Endothelial cell of umbilical vein (primary cell): ENCODE measurements at regions of chr15 and their contacts with region 1.

Region 1: GRCh38 chr15:73240866-73241499 is 127.8 kb downstream of the HCN4 start:
- DNase-seq: peak; percentile 66
- H3K4me3 ChIP-seq: no peak overlapping the region
- H3K27ac ChIP-seq: no peak overlapping the region
- H3K4me1 ChIP-seq: no peaks in the 10 kb centered on the region
- H3K27me3 ChIP-seq: peaks cover 0 to 4% of the 10 kb centered on the region in 2 experiments
- CTCF ChIP-seq: peak; percentile 64 to 67
- POLR2A ChIP-seq: no peak

Region 2: GRCh38 chr15:73226093-73226814 is 14.7 kb before region 1 on chr15:
- CTCF ChIA-PET with region 1: interaction called, 16 read pairs
- POLR2A ChIA-PET with region 1: no interaction called
- dilution Hi-C with region 1: no loop called
- intact Hi-C with region 1: no loop called
- DNase-seq: no peak
- H3K4me3 ChIP-seq: no peak overlapping the region
- H3K27ac ChIP-seq: no peak overlapping the region
- H3K4me1 ChIP-seq: no peaks in the 10 kb centered on the region
- H3K27me3 ChIP-seq: peaks cover 0 to 2% of the 10 kb centered on the region in 2 experiments
- CTCF ChIP-seq: no peak
- POLR2A ChIP-seq: no peak

Region 3: DNA sequence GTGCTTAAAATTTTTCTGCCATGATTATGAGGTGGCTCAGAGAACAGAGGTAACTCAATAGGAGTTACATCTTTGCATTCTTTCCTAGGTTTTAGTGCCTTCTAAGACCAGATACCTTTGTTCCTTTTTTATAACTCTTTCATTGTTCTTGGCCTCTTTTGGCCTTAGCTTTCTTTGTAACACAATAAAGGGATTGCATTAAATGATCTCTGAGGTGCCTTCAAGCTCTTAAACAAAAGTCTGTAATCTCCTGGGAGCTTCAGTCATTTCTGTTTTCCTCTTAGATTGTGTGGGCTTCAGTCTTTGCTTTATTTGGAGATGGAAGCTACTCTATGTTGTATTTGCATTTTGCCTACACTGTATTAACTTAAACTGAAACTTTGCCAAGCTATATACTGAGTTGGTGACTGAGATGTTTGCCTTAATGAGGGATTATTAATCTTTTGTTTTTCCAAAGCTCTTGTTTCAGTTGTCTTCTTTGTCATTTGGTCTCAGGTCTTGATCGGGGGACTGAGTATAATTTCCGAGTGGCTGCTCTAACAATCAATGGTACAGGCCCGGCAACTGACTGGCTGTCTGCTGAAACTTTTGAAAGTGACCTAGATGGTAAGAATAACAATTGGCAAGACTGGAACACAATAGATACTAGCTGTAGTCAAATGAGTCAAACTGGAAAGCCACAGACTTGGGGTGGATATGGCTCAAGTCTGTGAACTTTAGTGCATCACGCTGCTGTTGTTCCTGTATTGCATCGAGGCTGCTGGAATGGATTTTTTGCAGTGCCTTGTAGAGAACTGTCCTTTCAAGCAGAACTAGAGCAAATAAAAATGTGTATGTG is 17.5 kb after region 1 on chr15:
- CTCF ChIA-PET with region 1: interaction called, 112 read pairs
- POLR2A ChIA-PET with region 1: no interaction called
- dilution Hi-C with region 1: no loop called
- intact Hi-C with region 1: no loop called
- DNase-seq: no peak
- H3K4me3 ChIP-seq: no peak overlapping the region
- H3K27ac ChIP-seq: no peak overlapping the region
- H3K4me1 ChIP-seq: no peaks in the 10 kb centered on the region
- H3K27me3 ChIP-seq: no peaks in the 10 kb centered on the region
- CTCF ChIP-seq: no peak
- POLR2A ChIP-seq: no peak

Region 4: GRCh38 chr15:73265536-73266153 is 24.7 kb after region 1 on chr15:
- CTCF ChIA-PET with region 1: interaction called, 112 read pairs
- POLR2A ChIA-PET with region 1: no interaction called
- dilution Hi-C with region 1: no loop called
- intact Hi-C with region 1: loop called (anchors 1 kb)
- DNase-seq: peak; percentile 57
- H3K4me3 ChIP-seq: no peak overlapping the region
- H3K27ac ChIP-seq: no peak overlapping the region
- H3K4me1 ChIP-seq: no peaks in the 10 kb centered on the region
- H3K27me3 ChIP-seq: no peaks in the 10 kb centered on the region
- CTCF ChIP-seq: peak; percentile 63 to 71
- POLR2A ChIP-seq: no peak

Region 5: DNA sequence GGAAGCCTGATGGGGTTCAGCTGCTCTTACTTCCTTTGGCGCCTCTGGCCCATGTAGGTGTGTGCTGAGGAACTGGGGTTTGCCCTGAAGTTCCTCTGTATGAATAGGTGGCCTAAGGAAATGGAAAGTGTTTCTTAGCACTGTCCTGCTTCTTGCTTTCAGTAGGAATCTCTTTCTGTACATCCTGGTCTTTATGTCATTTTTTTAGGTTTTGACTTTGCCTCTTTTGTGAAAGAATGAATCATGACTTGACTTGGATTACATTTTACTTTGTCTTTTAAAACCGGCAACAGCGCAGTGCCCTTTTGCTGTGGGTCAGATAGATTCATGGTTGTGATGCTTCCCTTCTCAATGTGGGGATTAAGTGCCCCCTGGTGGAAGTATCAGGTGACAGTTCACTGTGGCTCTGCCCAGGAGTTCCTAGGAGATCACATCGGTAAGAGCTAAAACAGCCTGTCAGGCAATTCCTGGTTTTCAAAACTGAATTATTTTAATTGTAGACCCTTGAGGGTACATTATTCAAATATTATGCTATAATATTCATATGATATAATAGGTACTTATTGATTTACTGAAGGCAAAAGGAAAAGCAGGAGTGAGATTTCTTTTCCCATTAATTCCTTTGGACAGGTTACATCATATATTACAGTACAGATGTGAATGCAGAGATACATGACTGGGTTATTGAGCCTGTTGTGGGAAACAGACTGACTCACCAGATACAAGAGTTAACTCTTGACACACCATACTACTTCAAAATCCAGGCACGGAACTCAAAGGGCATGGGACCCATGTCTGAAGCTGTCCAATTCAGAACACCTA is 32.4 kb after region 1 on chr15:
- CTCF ChIA-PET with region 1: interaction called, 120 read pairs
- POLR2A ChIA-PET with region 1: no interaction called
- dilution Hi-C with region 1: no loop called
- intact Hi-C with region 1: loop called (anchors 1 kb)
- DNase-seq: peak; percentile 58
- H3K4me3 ChIP-seq: no peak overlapping the region
- H3K27ac ChIP-seq: no peak overlapping the region
- H3K4me1 ChIP-seq: no peaks in the 10 kb centered on the region
- H3K27me3 ChIP-seq: peaks cover 2 to 12% of the 10 kb centered on the region in 2 experiments
- CTCF ChIP-seq: peak; percentile 63 to 65
- POLR2A ChIP-seq: no peak

Region 6: DNA sequence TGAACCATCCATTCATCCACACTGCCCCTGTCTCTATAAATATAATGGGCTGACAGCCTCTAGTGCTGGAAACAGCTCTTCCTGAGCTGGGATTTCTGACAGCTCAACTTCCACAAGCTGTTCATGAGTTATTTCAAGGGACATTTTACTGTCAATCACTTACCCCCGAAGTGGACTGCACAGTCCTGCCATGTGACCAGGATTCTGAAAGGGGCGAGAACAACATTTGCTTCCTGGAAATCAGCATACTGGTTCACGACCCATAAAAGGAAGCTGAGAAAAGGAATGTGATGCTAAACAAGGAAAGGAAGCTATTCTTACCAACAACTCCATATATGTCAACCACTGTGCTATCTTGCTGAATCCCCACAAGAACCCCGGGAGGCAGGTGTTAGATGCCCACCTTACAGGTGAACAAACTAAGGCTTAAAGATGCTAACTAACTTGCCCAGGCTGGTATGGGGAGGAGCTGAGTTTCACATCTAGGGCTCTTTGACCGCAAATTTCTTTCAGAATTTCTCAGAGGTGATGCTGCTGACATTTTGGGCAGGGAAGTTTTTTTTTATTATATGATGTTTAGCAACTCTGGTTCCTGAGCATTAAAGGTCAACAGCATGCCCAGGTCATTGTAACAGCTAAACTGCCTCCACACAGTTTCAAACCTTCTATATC is 185.5 kb after region 1 on chr15:
- CTCF ChIA-PET with region 1: no interaction called
- POLR2A ChIA-PET with region 1: no interaction called
- dilution Hi-C with region 1: no loop called
- intact Hi-C with region 1: no loop called
- DNase-seq: no peak
- H3K4me3 ChIP-seq: no peak overlapping the region
- H3K27ac ChIP-seq: no peak overlapping the region
- H3K4me1 ChIP-seq: no peaks in the 10 kb centered on the region
- H3K27me3 ChIP-seq: peaks cover 0 to 2% of the 10 kb centered on the region in 2 experiments
- CTCF ChIP-seq: no peak
- POLR2A ChIP-seq: no peak